ENCODE measurements at regions of chr19 and their contacts with region 1.

Region 1: GRCh38 chr19:11924886-11925650 is at the start of gene ZNF700:
- DNase-seq: peak; percentile 67 to 93 (median 90)
- ATAC-seq: peak; percentile 94
- H3K4me3 ChIP-seq: peak within 1 kb of the TSS; percentile 98
- H3K4me3 Mint-ChIP-seq: peak within 1 kb of the TSS; percentile 91 to 99 (median 98)
- H3K27ac ChIP-seq: peak within 1 kb of the TSS; percentile 75
- H3K27ac Mint-ChIP-seq: peak within 1 kb of the TSS; percentile 93 to 99 (median 98)
- H3K4me1 ChIP-seq: peaks cover 6 to 10% of the 10 kb centered on the region in 2 donors
- H3K4me1 Mint-ChIP-seq: peaks cover 26 to 56% (median 39%) of the 10 kb centered on the region in 7 donors
- H3K27me3 ChIP-seq: no peaks in the 10 kb centered on the region
- H3K27me3 Mint-ChIP-seq: no peaks in the 10 kb centered on the region
- total RNA-seq, gene ZNF700: 18.0 to 26.4 (median 22.8) TPM

Region 2: DNA sequence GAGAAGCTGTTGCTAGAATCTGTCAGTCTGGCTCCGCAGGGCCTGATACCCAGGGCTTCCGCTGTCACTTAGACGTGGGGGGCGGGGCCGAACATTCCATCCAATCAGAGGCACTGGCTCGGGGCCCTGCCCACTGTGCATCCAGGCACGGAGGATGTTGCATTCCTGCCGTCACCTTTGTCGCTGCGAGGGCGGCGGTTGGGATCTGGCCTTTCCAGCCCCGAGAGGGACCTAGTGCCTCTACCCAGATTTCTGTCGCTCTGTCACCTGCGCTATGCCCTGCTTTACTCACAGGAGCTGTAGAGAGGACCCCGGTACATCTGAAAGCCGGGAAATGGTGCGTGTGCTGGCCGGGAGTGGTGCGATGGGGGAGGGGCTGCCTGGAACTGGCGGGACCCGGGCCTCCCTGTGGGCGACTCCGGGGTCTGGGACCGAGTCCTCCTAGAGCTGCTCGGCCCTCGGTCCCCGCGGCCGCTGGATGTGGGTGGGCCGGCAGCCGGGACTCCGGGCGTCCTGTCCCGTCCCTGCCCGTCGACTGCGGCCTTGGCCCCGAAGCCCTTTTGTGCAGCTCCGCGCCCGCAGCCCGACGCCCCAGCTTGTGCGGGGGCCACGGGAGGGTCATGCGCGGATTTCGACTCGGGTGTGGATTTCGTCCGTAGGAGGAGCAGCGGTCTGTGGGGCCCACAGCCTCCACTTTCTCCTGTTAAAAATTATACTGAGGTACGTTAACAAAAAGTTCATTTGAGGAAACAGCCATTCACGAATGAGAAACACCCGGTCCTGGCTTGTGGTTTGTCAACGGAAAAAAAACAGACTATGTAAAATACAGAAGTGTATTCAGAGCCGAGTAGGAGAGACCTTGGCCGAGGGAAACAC is 76.2 kb before region 1 on chr19 and contains the start of gene ZNF439:
- CTCF ChIA-PET with region 1: interaction called, 3 read pairs
- POLR2A ChIA-PET with region 1: interaction called, 5 read pairs
- intact Hi-C with region 1: loop called in 1 of 2 experiments (anchors 1 kb)
- DNase-seq: peak; percentile 74 to 93 (median 86)
- ATAC-seq: peak; percentile 100
- H3K4me3 ChIP-seq: peak within 1 kb of the TSS; percentile 88
- H3K4me3 Mint-ChIP-seq: peak within 1 kb of the TSS; percentile 88 to 93 (median 91)
- H3K27ac ChIP-seq: peak within 1 kb of the TSS; percentile 66
- H3K27ac Mint-ChIP-seq: peak within 1 kb of the TSS; percentile 81 to 96 (median 90)
- H3K4me1 ChIP-seq: peaks cover 0 to 15% of the 10 kb centered on the region in 2 donors
- H3K4me1 Mint-ChIP-seq: peaks cover 13 to 42% (median 24%) of the 10 kb centered on the region in 7 donors
- H3K27me3 ChIP-seq: no peaks in the 10 kb centered on the region
- H3K27me3 Mint-ChIP-seq: no peaks in the 10 kb centered on the region
- total RNA-seq, gene ZNF439: 5.6 to 22.5 (median 14.1) TPM

Region 3: DNA sequence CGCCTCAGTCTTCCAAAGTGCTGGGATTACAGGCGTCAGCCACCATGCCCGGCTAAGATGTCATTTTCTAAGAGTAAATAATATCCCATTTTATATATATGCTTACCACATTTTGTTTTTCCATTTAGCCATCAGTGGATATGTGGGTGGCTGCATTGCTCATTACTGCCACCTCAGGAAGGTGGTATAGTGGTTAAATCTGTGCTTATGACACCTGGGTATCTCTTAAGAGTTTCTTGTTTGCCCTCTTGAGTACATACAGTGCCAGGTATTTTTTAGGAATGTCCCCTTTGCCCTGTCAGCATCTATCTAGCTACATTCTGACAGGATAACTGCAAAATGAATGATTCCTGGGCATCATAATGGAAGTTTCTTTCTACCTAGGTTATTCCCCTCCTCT is 22.8 kb before region 1 on chr19:
- CTCF ChIA-PET with region 1: no interaction called
- POLR2A ChIA-PET with region 1: no interaction called
- intact Hi-C with region 1: no loop called
- DNase-seq: no peak
- ATAC-seq: no peak
- H3K4me3 ChIP-seq: no peak overlapping the region
- H3K4me3 Mint-ChIP-seq: no peak overlapping the region
- H3K27ac ChIP-seq: no peak overlapping the region
- H3K27ac Mint-ChIP-seq: no peak overlapping the region
- H3K4me1 ChIP-seq: no peaks in the 10 kb centered on the region
- H3K4me1 Mint-ChIP-seq: peaks cover 0 to 2% (median 0%) of the 10 kb centered on the region in 7 donors
- H3K27me3 ChIP-seq: no peaks in the 10 kb centered on the region
- H3K27me3 Mint-ChIP-seq: no peaks in the 10 kb centered on the region

Region 4: GRCh38 chr19:11964858-11965645 is 40.0 kb after region 1 on chr19 and contains the start of gene ZNF763:
- CTCF ChIA-PET with region 1: interaction called, 40 read pairs
- POLR2A ChIA-PET with region 1: interaction called, 6 read pairs
- intact Hi-C with region 1: loop called (anchors 1 kb)
- DNase-seq: peak; percentile 70 to 86 (median 83)
- ATAC-seq: peak; percentile 95
- H3K4me3 ChIP-seq: peak within 1 kb of the TSS; percentile 90
- H3K4me3 Mint-ChIP-seq: peak within 1 kb of the TSS; percentile 87 to 99 (median 94)
- H3K27ac ChIP-seq: peak within 1 kb of the TSS; percentile 88
- H3K27ac Mint-ChIP-seq: peak within 1 kb of the TSS; percentile 89 to 97 (median 94)
- H3K4me1 ChIP-seq: peaks cover 8 to 10% of the 10 kb centered on the region in 2 donors
- H3K4me1 Mint-ChIP-seq: peaks cover 21 to 34% (median 27%) of the 10 kb centered on the region in 7 donors
- H3K27me3 ChIP-seq: no peaks in the 10 kb centered on the region
- H3K27me3 Mint-ChIP-seq: no peaks in the 10 kb centered on the region
- total RNA-seq, gene ZNF763: 1.3 to 17.3 (median 4.4) TPM

Region 5: GRCh38 chr19:12092065-12092867 is 167.2 kb after region 1 on chr19:
- CTCF ChIA-PET with region 1: interaction called, 6 read pairs
- POLR2A ChIA-PET with region 1: no interaction called
- intact Hi-C with region 1: loop called in 1 of 2 experiments (anchors 1 kb)
- DNase-seq: peak in 8 of 9 donors; percentile 11 to 63 (median 22)
- ATAC-seq: peak; percentile 82
- H3K4me3 ChIP-seq: peak overlapping the region; percentile 45
- H3K4me3 Mint-ChIP-seq: peak overlapping the region; percentile 72 to 88 (median 82)
- H3K27ac ChIP-seq: peak overlapping the region; percentile 35
- H3K27ac Mint-ChIP-seq: peak overlapping the region in 6 of 9 donors; percentile 31 to 85 (median 64)
- H3K4me1 ChIP-seq: peaks cover 0 to 5% of the 10 kb centered on the region in 2 donors
- H3K4me1 Mint-ChIP-seq: peaks cover 5 to 19% (median 8%) of the 10 kb centered on the region in 7 donors
- H3K27me3 ChIP-seq: no peaks in the 10 kb centered on the region
- H3K27me3 Mint-ChIP-seq: peaks cover 0 to 17% (median 4%) of the 10 kb centered on the region in 5 donors

Region 6: DNA sequence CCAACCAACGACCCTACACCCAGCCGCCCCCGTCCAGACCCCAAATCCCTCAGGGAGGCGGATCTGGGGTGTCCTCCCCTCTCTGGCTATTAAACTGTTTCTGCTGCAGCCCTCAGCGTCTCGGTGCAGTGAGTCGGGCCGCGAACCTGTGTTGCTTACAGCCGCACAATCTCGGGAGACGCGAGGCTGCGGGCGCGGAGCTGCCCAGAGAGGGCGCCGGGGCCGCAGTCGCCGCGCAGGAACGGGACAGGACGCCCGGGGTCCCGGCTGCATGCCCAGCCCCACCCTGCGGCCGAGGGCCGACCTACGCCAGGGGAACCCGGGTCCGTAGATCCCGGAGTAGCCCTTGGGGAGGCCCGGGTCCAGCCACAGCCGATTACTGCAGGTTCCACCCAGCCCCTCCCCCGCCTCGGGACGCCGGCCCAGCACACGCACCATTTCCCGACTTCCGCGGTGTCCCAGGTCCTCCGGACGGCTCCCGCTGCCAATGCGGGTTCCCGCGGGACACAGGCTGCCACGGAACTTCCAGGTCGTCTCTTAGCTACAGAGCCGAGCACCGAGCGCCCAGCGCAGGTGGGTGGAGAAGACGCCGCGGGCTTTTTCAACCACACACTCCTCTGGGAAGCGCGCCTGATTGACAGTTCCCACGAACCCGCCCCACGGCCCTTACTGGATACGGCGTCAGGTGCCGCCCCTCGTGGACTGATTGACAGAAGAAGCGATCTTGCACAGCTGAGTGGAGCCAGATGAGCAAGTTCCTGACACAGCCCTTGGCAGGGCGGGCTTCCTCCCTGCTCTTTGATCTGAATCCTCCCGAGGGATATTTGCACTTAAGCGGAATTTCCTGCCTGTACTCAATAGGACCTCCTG is 475.8 kb after region 1 on chr19 and contains the start of gene ZNF799:
- CTCF ChIA-PET with region 1: no interaction called
- POLR2A ChIA-PET with region 1: no interaction called
- intact Hi-C with region 1: loop called in 1 of 2 experiments (anchors 1 kb)
- DNase-seq: peak; percentile 55 to 79 (median 76)
- ATAC-seq: peak; percentile 96
- H3K4me3 ChIP-seq: peak within 1 kb of the TSS; percentile 91
- H3K4me3 Mint-ChIP-seq: peak within 1 kb of the TSS; percentile 88 to 96 (median 94)
- H3K27ac ChIP-seq: peak within 1 kb of the TSS; percentile 59
- H3K27ac Mint-ChIP-seq: peak within 1 kb of the TSS; percentile 75 to 93 (median 82)
- H3K4me1 ChIP-seq: no peaks in the 10 kb centered on the region
- H3K4me1 Mint-ChIP-seq: peaks cover 5 to 34% (median 20%) of the 10 kb centered on the region in 7 donors
- H3K27me3 ChIP-seq: no peaks in the 10 kb centered on the region
- H3K27me3 Mint-ChIP-seq: no peaks in the 10 kb centered on the region
- total RNA-seq, gene ZNF799: 1.7 to 9.9 (median 4.4) TPM

Measured in naive thymus-derived CD4-positive, alpha-beta T cell (primary cell).